HepG2 (cell line): ENCODE measurements at regions of chr17 and their contacts with region 1.

Region 1: DNA sequence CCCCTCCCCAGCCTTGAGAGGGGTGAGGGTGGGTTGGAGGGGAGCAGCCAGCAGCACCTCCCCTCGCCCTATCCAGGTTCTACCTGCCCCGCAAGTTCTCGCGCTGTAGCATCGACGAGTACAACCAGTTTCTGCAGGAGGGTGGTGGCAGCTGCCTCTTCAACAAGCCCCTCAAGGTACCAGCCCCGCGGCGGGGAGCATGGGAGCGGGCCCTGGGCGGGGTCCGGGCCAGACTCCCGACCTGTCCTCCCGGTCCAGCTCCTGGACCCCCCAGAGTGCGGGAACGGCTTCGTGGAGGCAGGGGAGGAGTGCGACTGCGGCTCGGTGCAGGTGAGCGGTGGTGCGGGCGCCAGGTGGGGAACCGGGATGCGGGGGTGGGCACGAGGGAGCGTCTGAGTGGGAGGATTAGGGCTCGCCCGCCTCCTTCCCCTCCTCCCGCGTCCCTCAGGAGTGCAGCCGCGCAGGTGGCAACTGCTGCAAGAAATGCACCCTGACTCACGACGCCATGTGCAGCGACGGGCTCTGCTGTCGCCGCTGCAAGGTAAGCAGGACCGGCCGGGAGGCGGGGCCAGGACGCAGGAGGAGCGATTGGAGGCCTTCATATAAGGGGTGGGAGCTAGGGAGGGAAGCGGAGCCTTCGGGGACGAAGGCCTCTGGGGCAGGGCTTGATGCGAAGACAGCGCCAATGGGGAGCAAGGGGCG is 16.5 kb downstream of the ADAM11 start:
- DNase-seq: peak; percentile 98
- ATAC-seq: peak; percentile 90
- H3K4me3 ChIP-seq: peak overlapping the region; percentile 55 to 75 (median 56)
- H3K27ac ChIP-seq: peak overlapping the region; percentile 28
- H3K4me1 ChIP-seq: peaks cover 43% of the 10 kb centered on the region
- H3K27me3 ChIP-seq: peaks cover 11 to 51% of the 10 kb centered on the region in 2 experiments; a peak in 4 of 5 replicates
- CTCF ChIP-seq: no peak; the same call in 1 of the 2 replicates
- EP300 ChIP-seq: no peak
- POLR2A ChIP-seq: peak; percentile 51 to 78; a peak in 2 of 4 replicates
- RAD21 ChIP-seq: no peak

Region 2: DNA sequence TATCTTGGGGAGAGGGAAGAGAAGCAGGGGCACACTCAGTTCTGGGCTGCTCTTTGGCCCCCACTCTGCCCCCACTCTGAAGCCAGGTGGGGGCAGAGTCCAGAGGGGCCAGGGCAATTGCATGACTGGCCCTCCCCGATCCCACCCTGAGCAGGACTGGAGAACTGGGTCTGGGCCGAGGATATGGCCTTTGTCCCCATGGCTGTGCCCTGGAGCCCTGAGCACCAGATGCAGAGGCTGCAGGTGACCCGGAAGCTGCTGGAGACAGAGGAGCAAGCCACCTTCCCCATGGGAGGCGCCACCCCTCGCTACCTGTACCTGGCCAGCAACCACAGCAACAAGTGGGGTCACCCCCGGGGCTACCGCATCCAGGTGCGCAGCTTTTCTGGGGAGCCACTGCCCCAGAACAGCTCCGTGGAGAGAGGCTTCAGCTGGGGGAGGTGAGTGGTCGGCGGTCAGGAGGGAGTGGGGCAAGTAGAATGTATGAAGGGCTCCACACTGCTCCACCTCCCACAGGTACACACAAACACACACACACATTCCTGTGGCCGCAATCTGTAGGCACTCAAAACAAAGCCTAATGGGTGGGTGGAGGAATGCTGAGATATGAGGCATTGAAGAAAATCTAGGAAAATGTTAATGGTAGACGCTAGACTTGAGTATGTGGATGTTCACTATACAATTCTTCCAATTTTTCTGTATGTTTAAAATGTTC is 1902.9 kb before region 1 on chr17:
- CTCF ChIA-PET with region 1: no interaction called
- POLR2A ChIA-PET with region 1: no interaction called
- in situ Hi-C with region 1: no loop called
- intact Hi-C with region 1: no loop called
- DNase-seq: no peak
- ATAC-seq: peak; percentile 50
- H3K4me3 ChIP-seq: no peak overlapping the region
- H3K27ac ChIP-seq: peak overlapping the region; percentile 5
- H3K4me1 ChIP-seq: peaks cover 58% of the 10 kb centered on the region
- H3K27me3 ChIP-seq: no peaks in the 10 kb centered on the region
- CTCF ChIP-seq: no peak
- EP300 ChIP-seq: peak in 1 of 2 experiments; percentile 28; a peak in 1 of 4 replicates
- POLR2A ChIP-seq: no peak
- RAD21 ChIP-seq: no peak

Region 3: GRCh38 chr17:44829523-44830358 is 54.5 kb after region 1 on chr17 and contains the start of gene GJC1:
- CTCF ChIA-PET with region 1: interaction called, 4 read pairs
- POLR2A ChIA-PET with region 1: interaction called, 4 read pairs
- in situ Hi-C with region 1: loop called (anchors 5 kb)
- intact Hi-C with region 1: no loop called
- DNase-seq: no peak
- ATAC-seq: peak; percentile 64
- H3K4me3 ChIP-seq: peak within 1 kb of the TSS; percentile 53 to 72 (median 72)
- H3K27ac ChIP-seq: no peak within 1 kb of the TSS
- H3K4me1 ChIP-seq: peaks cover 31% of the 10 kb centered on the region
- H3K27me3 ChIP-seq: peaks cover 3 to 38% of the 10 kb centered on the region in 2 experiments
- CTCF ChIP-seq: no peak
- EP300 ChIP-seq: no peak
- POLR2A ChIP-seq: no peak
- RAD21 ChIP-seq: no peak
- total RNA-seq, gene GJC1: 1.7 and 2.0 TPM in 2 replicates

Region 4: DNA sequence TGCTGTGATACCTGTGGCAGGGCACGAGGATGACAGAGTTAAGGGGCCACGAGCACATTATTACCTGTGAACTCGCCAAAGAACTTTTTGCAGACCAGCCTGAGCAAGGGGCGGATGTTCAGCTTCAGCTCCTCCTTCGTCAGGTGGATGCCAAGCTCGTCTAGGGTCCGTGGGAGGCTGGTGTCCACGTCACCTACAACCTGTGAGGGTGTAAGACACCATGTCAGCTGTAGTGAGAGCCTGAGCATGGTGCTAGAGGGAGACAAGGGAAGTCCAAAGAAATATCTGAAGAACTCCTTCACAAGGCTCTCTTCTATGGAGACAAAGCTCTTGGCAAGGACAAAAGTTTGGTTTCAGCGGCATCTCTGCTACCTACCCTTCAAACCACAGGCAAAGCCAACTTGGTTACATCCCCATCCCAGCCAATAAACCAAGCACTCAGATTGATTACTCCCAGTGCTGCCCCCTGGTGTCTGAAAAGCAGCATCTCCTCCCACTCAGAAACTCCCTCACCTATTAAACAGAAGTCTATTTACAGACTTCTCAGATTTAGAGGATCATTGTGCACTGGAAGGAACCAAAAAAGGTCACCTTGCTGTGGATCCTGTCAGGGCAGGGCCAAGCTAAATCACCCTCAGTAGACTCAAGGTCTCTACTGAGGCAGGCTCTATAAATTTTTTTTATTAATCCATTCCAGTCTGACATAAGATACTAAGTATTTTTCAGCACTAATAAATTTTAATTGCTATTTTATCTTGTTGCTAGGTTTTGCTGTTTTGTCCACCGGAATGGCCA is 89.8 kb after region 1 on chr17:
- CTCF ChIA-PET with region 1: interaction called, 66 read pairs
- POLR2A ChIA-PET with region 1: interaction called, 8 read pairs
- in situ Hi-C with region 1: loop called (anchors 5 kb)
- intact Hi-C with region 1: loop called (anchors 1 kb)
- DNase-seq: peak; percentile 71
- ATAC-seq: peak; percentile 65
- H3K4me3 ChIP-seq: no peak overlapping the region
- H3K27ac ChIP-seq: no peak overlapping the region
- H3K4me1 ChIP-seq: peaks cover 36% of the 10 kb centered on the region
- H3K27me3 ChIP-seq: no peaks in the 10 kb centered on the region
- CTCF ChIP-seq: peak; percentile 86
- EP300 ChIP-seq: no peak
- POLR2A ChIP-seq: no peak
- RAD21 ChIP-seq: peak; percentile 77

Region 5: GRCh38 chr17:44878627-44879221 is 103.4 kb after region 1 on chr17:
- CTCF ChIA-PET with region 1: interaction called, 25 read pairs
- POLR2A ChIA-PET with region 1: no interaction called
- in situ Hi-C with region 1: no loop called
- intact Hi-C with region 1: no loop called
- DNase-seq: peak; percentile 37
- ATAC-seq: peak; percentile 45; the same call in 2 of the 3 replicates
- H3K4me3 ChIP-seq: no peak overlapping the region
- H3K27ac ChIP-seq: no peak overlapping the region
- H3K4me1 ChIP-seq: no peaks in the 10 kb centered on the region
- H3K27me3 ChIP-seq: no peaks in the 10 kb centered on the region
- CTCF ChIP-seq: peak; percentile 65
- EP300 ChIP-seq: no peak
- POLR2A ChIP-seq: no peak
- RAD21 ChIP-seq: no peak; the same call in 1 of the 2 replicates

Region 6: GRCh38 chr17:44899069-44899782 is 123.9 kb after region 1 on chr17 and contains the start of gene EFTUD2:
- CTCF ChIA-PET with region 1: no interaction called
- POLR2A ChIA-PET with region 1: interaction called, 11 read pairs
- in situ Hi-C with region 1: no loop called
- intact Hi-C with region 1: no loop called
- DNase-seq: peak; percentile 85
- ATAC-seq: peak; percentile 88
- H3K4me3 ChIP-seq: peak within 1 kb of the TSS; percentile 79 to 94 (median 87)
- H3K27ac ChIP-seq: peak within 1 kb of the TSS; percentile 89
- H3K4me1 ChIP-seq: peaks cover 26% of the 10 kb centered on the region
- H3K27me3 ChIP-seq: no peaks in the 10 kb centered on the region; a peak in 1 of 5 replicates
- CTCF ChIP-seq: no peak
- EP300 ChIP-seq: peak; percentile 34 to 56; a peak in 1 of 4 replicates
- POLR2A ChIP-seq: peak; percentile 90 to 95
- RAD21 ChIP-seq: peak; percentile 51; the same call in 1 of the 2 replicates
- total RNA-seq, gene EFTUD2: 137 and 310 TPM in 2 replicates

Region 7: GRCh38 chr17:45021607-45022287 is 246.5 kb after region 1 on chr17:
- CTCF ChIA-PET with region 1: interaction called, 3 read pairs
- POLR2A ChIA-PET with region 1: interaction called, 3 read pairs
- in situ Hi-C with region 1: loop called (anchors 25 kb)
- intact Hi-C with region 1: loop called (anchors 5 kb)
- DNase-seq: peak; percentile 53
- ATAC-seq: peak; percentile 81
- H3K4me3 ChIP-seq: peak overlapping the region; percentile 55 to 77 (median 59)
- H3K27ac ChIP-seq: peak overlapping the region; percentile 60
- H3K4me1 ChIP-seq: peaks cover 50% of the 10 kb centered on the region
- H3K27me3 ChIP-seq: peaks cover 0 to 16% of the 10 kb centered on the region in 2 experiments; a peak in 2 of 5 replicates
- CTCF ChIP-seq: peak; percentile 79
- EP300 ChIP-seq: no peak
- POLR2A ChIP-seq: peak; percentile 32 to 65; a peak in 2 of 4 replicates
- RAD21 ChIP-seq: peak; percentile 98

Region 8: GRCh38 chr17:45096141-45096540 is 320.9 kb after region 1 on chr17:
- CTCF ChIA-PET with region 1: no interaction called
- POLR2A ChIA-PET with region 1: no interaction called
- in situ Hi-C with region 1: no loop called
- intact Hi-C with region 1: no loop called
- DNase-seq: peak; percentile 41
- ATAC-seq: no peak
- H3K4me3 ChIP-seq: no peak overlapping the region
- H3K27ac ChIP-seq: no peak overlapping the region
- H3K4me1 ChIP-seq: peaks cover 26% of the 10 kb centered on the region
- H3K27me3 ChIP-seq: no peaks in the 10 kb centered on the region
- CTCF ChIP-seq: peak; percentile 64
- EP300 ChIP-seq: no peak
- POLR2A ChIP-seq: no peak
- RAD21 ChIP-seq: peak; percentile 25; the same call in 1 of the 2 replicates